ENCODE measurements at regions of chr1 and their contacts with region 1.

Region 1: DNA sequence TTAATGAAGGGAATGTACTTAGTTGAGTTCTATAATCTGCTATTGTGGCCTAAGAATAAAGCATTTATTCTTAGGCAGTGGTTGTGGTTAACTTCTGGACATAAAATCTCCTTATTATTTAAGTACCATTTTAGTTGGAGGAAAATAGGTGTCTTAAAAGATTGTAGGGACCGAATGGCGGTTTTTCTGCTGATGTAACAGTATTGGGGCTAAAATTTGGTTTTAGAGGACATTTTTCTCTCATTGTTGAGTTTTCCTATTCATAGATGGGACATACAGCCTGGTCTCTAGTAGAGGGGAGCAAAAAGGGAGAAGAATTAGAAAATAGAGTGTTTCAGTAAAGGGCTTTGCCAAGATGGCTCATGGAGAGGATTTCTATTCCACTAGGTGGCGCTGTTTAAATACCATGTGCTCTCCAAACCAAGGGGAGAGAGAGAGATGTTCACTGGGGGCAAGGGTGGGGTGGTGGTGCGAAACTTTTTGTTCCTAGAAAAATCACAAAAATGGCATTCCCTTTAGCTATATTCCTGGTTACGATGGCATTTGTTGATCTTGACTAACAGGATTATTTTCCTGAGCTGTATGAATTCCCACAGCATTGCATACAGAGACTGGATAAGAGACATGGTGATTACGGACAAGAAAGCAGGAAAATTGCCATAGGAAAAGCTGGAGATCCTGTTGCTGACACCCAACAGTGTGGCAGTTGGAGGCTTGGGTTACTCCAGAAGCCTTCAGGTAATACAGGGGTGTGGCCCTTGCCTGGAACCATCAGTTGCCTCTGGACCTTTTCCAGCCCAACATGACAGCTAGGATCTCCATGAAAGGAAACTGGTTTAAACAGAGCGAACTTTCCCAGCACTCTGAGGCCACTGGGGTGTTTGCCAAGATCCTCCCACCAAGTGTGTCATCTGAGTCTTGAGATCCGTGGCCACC is 18.2 kb upstream of the FCGR2A start:
- DNase-seq: peak; percentile 85
- H3K4me3 Mint-ChIP-seq: no peak overlapping the region
- H3K27ac Mint-ChIP-seq: no peak overlapping the region
- H3K4me1 Mint-ChIP-seq: peaks cover 16% of the 10 kb centered on the region
- H3K27me3 Mint-ChIP-seq: peaks cover 49% of the 10 kb centered on the region

Region 2: DNA sequence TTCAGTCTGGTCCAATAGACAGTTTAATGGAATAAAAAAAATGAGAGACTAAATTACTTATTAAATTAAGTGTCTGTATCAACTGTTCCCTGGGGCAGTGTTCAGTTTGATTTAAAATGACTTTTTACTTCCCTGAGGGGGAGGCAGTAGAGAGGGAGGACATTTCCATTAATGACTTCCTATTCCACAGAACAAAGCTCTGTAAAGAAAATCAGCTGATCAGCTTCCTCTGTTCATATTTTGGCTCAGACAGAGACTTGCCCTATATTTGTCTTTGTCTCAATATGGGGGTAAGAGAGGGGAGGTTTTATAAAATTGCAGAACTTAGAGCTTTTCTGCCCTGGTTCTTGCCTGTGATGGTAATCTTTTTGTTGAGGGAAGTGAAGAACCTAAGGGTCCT is 127.8 kb before region 1 on chr1:
- intact Hi-C with region 1: no loop called
- DNase-seq: no peak
- H3K4me3 Mint-ChIP-seq: no peak overlapping the region
- H3K27ac Mint-ChIP-seq: peak overlapping the region; percentile 7
- H3K4me1 Mint-ChIP-seq: peaks cover 2% of the 10 kb centered on the region
- H3K27me3 Mint-ChIP-seq: no peaks in the 10 kb centered on the region

Region 3: DNA sequence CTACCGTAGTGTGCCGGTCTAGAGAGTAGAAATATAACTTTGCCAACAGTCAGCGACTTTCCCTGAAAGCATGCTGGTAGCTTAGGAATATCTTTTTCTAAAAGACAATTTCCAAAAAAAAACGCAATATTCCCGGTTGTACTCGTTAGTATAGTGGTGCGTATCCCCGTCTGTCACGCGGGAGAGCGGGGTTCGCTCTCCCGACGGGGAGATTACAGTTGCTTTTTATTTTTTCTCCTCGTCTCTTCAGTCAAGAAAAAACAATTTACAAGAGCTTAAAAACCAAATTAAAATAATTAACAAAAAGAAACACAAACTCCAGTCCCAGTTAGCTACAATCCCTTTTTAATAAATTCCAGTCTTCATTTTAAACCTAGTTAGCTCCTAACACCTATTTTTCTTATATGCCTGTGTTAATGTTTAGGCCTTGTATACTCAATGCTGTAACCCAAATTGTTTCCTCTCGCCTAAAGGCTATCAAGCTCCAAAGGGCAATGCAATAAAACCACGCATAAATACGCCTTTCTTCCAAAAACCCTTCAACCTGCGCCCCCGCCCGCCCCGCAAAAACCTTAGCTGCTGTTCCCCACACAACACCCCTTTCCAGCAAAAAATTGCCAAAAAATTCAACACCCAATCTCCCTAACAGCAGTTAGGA is 45.0 kb after region 1 on chr1:
- intact Hi-C with region 1: loop called (anchors 10 kb)
- DNase-seq: peak; percentile 35
- H3K4me3 Mint-ChIP-seq: peak overlapping the region; percentile 20
- H3K27ac Mint-ChIP-seq: peak overlapping the region; percentile 43
- H3K4me1 Mint-ChIP-seq: peaks cover 16% of the 10 kb centered on the region
- H3K27me3 Mint-ChIP-seq: peaks cover 16% of the 10 kb centered on the region

Region 4: DNA sequence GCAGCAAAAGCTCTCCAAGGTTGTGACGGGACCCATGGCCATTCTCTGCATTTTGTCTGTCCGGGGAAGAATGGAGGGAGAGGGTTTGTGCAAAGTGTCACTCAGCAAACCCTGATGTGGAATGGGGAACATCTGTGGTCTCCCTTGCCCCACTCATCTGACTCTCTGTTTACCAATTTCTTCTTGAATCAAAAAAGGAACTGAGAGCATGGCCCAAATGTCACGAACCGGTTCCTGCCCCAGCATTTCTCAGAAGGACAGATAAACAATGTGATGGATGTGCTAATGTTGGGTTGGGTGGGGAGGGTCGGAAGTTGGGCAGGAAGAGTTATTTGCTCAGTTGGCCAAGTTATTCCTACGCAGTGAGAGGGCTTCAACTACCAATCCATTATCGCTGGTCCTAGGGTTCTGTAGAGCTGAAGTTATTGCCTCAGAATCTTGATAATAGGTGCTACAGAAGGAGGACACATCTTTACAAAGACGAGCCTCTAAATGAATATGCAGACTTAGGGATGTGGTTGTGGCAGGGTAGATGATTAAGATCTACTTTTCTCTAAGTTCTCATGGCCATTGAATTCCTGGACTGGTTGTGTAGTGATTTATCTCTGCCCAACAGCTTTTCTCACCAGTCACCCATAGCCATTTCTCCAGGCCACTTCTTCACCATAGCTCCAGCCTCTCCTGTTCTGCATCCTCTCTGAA is 252.9 kb after region 1 on chr1:
- intact Hi-C with region 1: loop called (anchors 1 kb)
- DNase-seq: no peak
- H3K4me3 Mint-ChIP-seq: no peak overlapping the region
- H3K27ac Mint-ChIP-seq: no peak overlapping the region
- H3K4me1 Mint-ChIP-seq: peaks cover 40% of the 10 kb centered on the region
- H3K27me3 Mint-ChIP-seq: peaks cover 38% of the 10 kb centered on the region

Measured in activated CD4-positive, alpha-beta T cell treated with anti-CD3 and anti-CD28 coated beads, Interleukin-2, amount 10 ng/mL, durations not matched to agents 24 days and 14 days (primary cell).